GM18951 (cell line): ENCODE measurements at regions of chr3 and their contacts with region 1.

Region 1: DNA sequence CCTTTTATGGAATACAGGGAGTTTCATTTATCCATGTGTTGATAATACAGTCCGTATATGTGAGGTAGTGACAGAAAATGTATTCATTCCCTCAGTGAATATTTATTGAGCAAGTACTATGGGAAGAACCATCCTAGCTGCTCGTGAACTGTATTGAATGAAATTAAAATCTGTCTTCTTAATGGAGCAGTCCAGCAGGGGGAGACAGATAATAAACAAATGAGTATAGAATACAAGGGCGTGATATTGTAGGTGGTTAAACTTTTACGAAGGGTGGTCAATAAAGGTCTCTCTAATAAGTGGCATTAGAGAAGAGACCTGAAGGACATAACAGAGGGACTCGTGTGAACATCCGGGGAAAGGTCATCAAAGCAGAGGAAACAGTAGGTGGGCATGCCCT is 62.7 kb upstream of the OSTN start:
- POLR2A ChIP-seq: no peak

Region 2: DNA sequence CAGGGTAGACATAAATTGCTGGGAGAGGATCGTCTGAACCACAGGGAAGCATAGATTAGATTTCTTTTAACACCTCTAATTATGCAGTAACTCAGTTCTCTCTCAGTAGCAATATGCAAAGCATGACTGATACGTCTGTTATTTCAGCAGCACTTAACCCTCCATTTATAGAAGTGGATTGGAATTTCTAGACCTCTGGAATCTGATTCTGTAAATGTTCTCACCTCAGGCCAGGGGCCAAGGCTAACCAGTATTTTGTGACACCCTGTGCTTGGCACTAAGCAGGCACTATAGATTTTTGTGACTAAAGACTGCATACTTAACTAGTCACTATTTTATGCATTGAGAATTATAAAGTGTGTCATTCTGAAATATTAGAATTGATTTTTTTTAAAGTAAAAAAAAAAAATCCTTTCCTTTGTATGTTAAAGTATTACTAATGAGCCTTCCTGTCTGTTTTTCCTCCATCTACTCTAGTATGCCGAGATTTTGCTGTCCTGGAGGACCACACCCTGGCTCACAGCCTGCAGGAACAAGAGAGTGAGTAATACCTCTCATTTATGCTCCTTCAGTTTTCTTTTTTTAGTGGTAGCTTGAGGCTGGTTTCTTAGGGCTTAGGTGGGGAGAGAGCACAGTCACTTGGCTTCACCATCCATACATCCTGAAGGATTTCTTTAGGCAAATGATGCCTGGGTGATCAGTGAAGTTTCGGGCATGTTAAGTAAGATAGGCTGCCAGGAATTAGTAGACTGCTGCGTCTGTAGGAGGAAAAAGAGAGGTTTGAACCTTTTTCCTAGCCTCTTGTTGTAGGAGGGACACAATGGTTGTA is 220.5 kb after region 1 on chr3:
- in situ Hi-C with region 1: loop called (anchors 25 kb)
- POLR2A ChIP-seq: no peak